ENCODE measurements at regions of chr9 and their contacts with region 1.

Region 1: GRCh38 chr9:92438900-92439526 is 14.7 kb upstream of the OMD start:
- DNase-seq: no peak
- ATAC-seq: no peak
- H3K4me3 ChIP-seq: no peak overlapping the region
- H3K27ac ChIP-seq: no peak overlapping the region
- H3K4me1 ChIP-seq: no peaks in the 10 kb centered on the region
- H3K27me3 ChIP-seq: no peaks in the 10 kb centered on the region
- CTCF ChIP-seq: no peak; a peak in 1 of 6 replicates
- EP300 ChIP-seq: no peak
- POLR2A ChIP-seq: no peak
- RAD21 ChIP-seq: peak; percentile 35; the same call in 1 of the 2 replicates

Region 2: GRCh38 chr9:92147030-92147851 is 291.8 kb before region 1 on chr9:
- CTCF ChIA-PET with region 1: interaction called, 3 read pairs
- POLR2A ChIA-PET with region 1: no interaction called
- RAD21 ChIA-PET with region 1: no interaction called
- SMC1A ChIA-PET with region 1: no interaction called
- in situ Hi-C with region 1: loop called (anchors 5 kb)
- intact Hi-C with region 1: no loop called
- DNase-seq: no peak
- ATAC-seq: peak; percentile 95
- H3K4me3 ChIP-seq: peak overlapping the region; percentile 19; the same call in 1 of the 2 replicates
- H3K27ac ChIP-seq: no peak overlapping the region; the same call in 1 of the 2 replicates
- H3K4me1 ChIP-seq: peaks cover 14% of the 10 kb centered on the region
- H3K27me3 ChIP-seq: no peaks in the 10 kb centered on the region
- CTCF ChIP-seq: no peak
- EP300 ChIP-seq: no peak
- POLR2A ChIP-seq: no peak
- RAD21 ChIP-seq: no peak

Region 3: GRCh38 chr9:92325269-92325990 is 113.6 kb before region 1 on chr9 and contains the starts of genes CENPP and NOL8:
- CTCF ChIA-PET with region 1: interaction called, 17 read pairs
- POLR2A ChIA-PET with region 1: no interaction called
- RAD21 ChIA-PET with region 1: interaction called, 10 read pairs
- SMC1A ChIA-PET with region 1: interaction called, 7 read pairs
- in situ Hi-C with region 1: no loop called
- intact Hi-C with region 1: loop called (anchors 10 kb)
- DNase-seq: peak; percentile 80
- ATAC-seq: peak; percentile 95
- H3K4me3 ChIP-seq: peak within 1 kb of the TSS; percentile 96
- H3K27ac ChIP-seq: peak within 1 kb of the TSS; percentile 98
- H3K4me1 ChIP-seq: peaks cover 2% of the 10 kb centered on the region; the same call in 1 of the 2 replicates
- H3K27me3 ChIP-seq: no peaks in the 10 kb centered on the region
- CTCF ChIP-seq: no peak
- EP300 ChIP-seq: no peak; a peak in 1 of 4 replicates
- POLR2A ChIP-seq: peak; percentile 88
- RAD21 ChIP-seq: no peak
- polyA plus RNA-seq, gene CENPP: 9.4 to 11.7 TPM
- polyA plus RNA-seq, gene NOL8: 55.9 to 58.6 TPM

Measured in GM12878 (cell line).